Psoas muscle (tissue), 8 donors: ENCODE measurements at regions of chr6 and their contacts with region 1.

Region 1: DNA sequence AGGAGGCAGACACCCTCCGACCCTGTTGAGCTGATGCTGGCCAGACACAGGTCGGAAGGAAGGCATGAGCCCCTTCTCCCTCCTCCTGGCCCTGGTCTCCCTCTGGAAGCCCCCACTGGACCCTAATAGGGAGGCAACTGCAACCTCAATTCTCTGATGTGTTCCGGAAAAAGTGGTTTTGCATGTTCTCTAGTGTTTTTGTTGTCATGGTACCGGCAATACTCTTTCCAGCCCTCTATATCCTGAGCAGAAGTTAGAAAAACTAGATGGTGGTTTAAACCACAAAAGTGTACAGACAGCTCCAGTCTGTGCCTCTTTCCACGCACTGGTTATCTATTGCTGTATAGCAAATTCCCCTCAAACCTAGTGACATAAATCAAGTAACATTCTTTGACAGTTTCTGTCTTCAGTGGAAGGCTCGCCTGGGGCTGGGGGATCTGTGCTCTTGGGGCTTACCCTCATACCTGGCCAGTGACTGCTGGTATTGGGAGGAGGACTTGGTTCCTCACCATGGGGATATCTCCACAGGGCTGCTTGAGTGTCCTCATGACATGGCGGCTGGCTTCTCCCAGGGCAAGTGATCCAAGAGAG is 37.0 kb downstream of the SYTL3 start:
- DNase-seq: no peak
- ATAC-seq: no peak
- H3K4me3 ChIP-seq: no peak overlapping the region
- H3K27ac ChIP-seq: no peak overlapping the region
- H3K4me1 ChIP-seq: peaks cover 8% of the 10 kb centered on the region
- H3K27me3 ChIP-seq: no peaks in the 10 kb centered on the region
- CTCF ChIP-seq: no peak

Region 2: GRCh38 chr6:158629367-158630221 is 57.3 kb before region 1 on chr6:
- intact Hi-C with region 1: loop called (anchors 1 to 2 kb)
- DNase-seq: peak; percentile 39 to 78
- ATAC-seq: peak; percentile 71 to 83 (median 80)
- H3K4me3 ChIP-seq: no peak overlapping the region
- H3K27ac ChIP-seq: peak overlapping the region; percentile 50
- H3K4me1 ChIP-seq: peaks cover 27% of the 10 kb centered on the region
- H3K27me3 ChIP-seq: no peaks in the 10 kb centered on the region
- CTCF ChIP-seq: peak; percentile 63